ENCODE measurements at regions of chr9 and their contacts with region 1.

Region 1: DNA sequence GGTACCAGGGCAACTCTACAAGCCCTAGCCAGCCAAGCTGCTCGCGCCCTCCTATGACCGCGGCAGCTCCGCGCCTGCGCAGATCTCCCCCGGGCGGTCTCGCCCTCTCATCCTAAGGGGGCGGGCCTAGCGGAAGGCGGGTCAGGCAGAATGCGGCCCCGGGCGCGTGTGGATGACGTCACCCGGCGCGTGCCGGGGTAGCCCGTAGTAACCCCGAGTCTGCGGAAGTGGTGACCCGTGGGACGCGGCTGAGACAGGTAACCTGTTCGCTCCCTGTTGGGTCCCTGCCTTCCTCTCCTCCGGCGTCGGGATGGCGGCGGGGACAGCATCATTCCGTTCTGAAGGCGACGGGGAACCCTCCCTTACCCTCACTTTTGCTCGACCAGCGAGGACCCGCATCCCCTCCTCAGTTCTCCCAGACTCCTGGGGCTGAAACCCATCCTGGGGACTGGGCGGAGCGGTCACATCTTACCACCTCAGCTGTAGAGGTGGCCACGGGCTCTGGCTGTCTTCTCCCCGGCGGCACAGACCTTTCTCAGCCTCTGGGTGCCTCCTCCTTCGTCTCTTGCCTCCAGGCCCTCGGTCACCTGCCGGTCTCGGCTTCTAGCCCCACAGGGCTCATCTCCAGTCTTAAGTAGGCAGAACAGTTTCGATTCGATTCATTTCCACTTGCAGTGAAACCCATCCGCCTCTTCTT is at the start of gene AOPEP:
- DNase-seq: peak; percentile 98 to 100 (median 99)
- ATAC-seq: peak; percentile 99
- H3K4me3 ChIP-seq: peak within 1 kb of the TSS; percentile 92
- H3K4me3 Mint-ChIP-seq: peak within 1 kb of the TSS; percentile 88 to 100 (median 98)
- H3K27ac ChIP-seq: peak within 1 kb of the TSS; percentile 82
- H3K27ac Mint-ChIP-seq: peak within 1 kb of the TSS; percentile 92 to 100 (median 98)
- H3K4me1 ChIP-seq: peaks cover 7% of the 10 kb centered on the region in 2 donors
- H3K4me1 Mint-ChIP-seq: peaks cover 7 to 24% (median 19%) of the 10 kb centered on the region in 7 donors
- H3K27me3 ChIP-seq: no peaks in the 10 kb centered on the region
- H3K27me3 Mint-ChIP-seq: peaks cover 0 to 2% (median 0%) of the 10 kb centered on the region in 5 donors
- total RNA-seq, gene AOPEP: 11.0 to 19.0 (median 14.9) TPM

Region 2: GRCh38 chr9:93064392-93065134 is 1662.1 kb before region 1 on chr9:
- CTCF ChIA-PET with region 1: no interaction called
- POLR2A ChIA-PET with region 1: no interaction called
- intact Hi-C with region 1: loop called in 1 of 2 experiments (anchors 10 kb)
- DNase-seq: peak; percentile 54 to 95 (median 90)
- ATAC-seq: peak; percentile 96
- H3K4me3 ChIP-seq: peak overlapping the region; percentile 90
- H3K4me3 Mint-ChIP-seq: peak overlapping the region; percentile 87 to 97 (median 92)
- H3K27ac ChIP-seq: peak overlapping the region; percentile 88
- H3K27ac Mint-ChIP-seq: peak overlapping the region; percentile 97 to 100 (median 99)
- H3K4me1 ChIP-seq: peaks cover 63 to 87% of the 10 kb centered on the region in 2 donors
- H3K4me1 Mint-ChIP-seq: peaks cover 71 to 95% (median 86%) of the 10 kb centered on the region in 7 donors
- H3K27me3 ChIP-seq: no peaks in the 10 kb centered on the region
- H3K27me3 Mint-ChIP-seq: no peaks in the 10 kb centered on the region

Region 3: DNA sequence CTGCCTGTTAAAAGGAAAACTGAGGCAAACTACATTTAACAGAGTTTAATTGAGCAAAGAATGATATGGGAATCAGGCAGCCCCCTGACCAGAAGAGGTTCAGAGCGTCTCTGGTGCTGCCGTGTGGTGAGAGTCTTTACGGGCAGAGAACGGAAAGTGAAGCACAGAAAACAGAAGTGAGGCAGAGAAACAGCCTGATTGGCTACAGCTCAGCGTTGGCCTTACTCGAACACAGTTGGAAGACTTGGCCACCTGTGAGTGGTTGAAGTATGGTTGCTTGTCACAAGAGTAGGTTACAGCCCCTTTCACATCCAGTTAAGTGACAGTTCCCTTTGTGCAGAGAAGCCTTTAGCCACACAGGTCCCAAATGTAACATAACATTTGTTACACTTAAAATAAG is 70.4 kb before region 1 on chr9:
- CTCF ChIA-PET with region 1: no interaction called
- POLR2A ChIA-PET with region 1: interaction called, 10 read pairs
- intact Hi-C with region 1: no loop called
- DNase-seq: peak in 8 of 9 donors; percentile 28 to 73 (median 60)
- ATAC-seq: peak; percentile 89
- H3K4me3 ChIP-seq: peak overlapping the region; percentile 49
- H3K4me3 Mint-ChIP-seq: peak overlapping the region; percentile 76 to 92 (median 83)
- H3K27ac ChIP-seq: peak overlapping the region; percentile 66
- H3K27ac Mint-ChIP-seq: peak overlapping the region; percentile 84 to 96 (median 92)
- H3K4me1 ChIP-seq: peaks cover 0 to 15% of the 10 kb centered on the region in 2 donors
- H3K4me1 Mint-ChIP-seq: peaks cover 10 to 31% (median 28%) of the 10 kb centered on the region in 7 donors
- H3K27me3 ChIP-seq: no peaks in the 10 kb centered on the region
- H3K27me3 Mint-ChIP-seq: peaks cover 0 to 6% (median 0%) of the 10 kb centered on the region in 5 donors

Region 4: DNA sequence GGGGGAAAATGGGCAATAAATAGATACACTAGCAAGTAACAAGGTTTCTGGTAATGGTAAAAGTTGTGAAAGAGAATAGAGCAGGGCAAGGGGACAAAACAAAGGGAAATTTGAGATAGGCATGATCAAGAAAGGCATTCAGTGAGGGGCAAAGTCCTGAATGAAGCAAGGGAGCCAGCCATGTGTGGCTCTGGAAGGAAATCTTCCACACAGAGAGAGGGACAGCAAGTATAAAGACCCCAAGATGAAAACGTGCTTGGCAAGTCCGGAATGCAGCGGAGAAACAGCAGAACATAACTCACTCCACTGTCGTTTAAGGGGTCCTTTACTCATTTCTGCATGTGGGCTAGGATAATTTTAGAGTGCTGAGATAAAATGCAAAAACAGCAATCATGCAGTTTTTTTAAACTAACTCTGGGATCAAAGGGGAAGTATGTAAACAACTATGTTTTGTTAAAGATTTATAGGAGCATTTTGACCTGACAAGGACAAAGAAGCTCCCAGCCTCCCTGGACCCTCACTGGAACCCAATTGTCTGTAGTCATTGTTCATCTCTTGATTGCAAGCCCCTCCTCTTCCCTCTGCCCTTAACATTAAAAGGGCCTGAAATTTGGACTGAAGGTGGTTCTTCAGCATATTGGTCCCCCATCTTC is 23.0 kb before region 1 on chr9:
- CTCF ChIA-PET with region 1: no interaction called
- POLR2A ChIA-PET with region 1: no interaction called
- intact Hi-C with region 1: no loop called
- DNase-seq: no peak
- ATAC-seq: no peak
- H3K4me3 ChIP-seq: no peak overlapping the region
- H3K4me3 Mint-ChIP-seq: no peak overlapping the region
- H3K27ac ChIP-seq: no peak overlapping the region
- H3K27ac Mint-ChIP-seq: no peak overlapping the region
- H3K4me1 ChIP-seq: no peaks in the 10 kb centered on the region
- H3K4me1 Mint-ChIP-seq: no peaks in the 10 kb centered on the region
- H3K27me3 ChIP-seq: no peaks in the 10 kb centered on the region
- H3K27me3 Mint-ChIP-seq: peaks cover 0 to 20% (median 18%) of the 10 kb centered on the region in 5 donors

Region 5: DNA sequence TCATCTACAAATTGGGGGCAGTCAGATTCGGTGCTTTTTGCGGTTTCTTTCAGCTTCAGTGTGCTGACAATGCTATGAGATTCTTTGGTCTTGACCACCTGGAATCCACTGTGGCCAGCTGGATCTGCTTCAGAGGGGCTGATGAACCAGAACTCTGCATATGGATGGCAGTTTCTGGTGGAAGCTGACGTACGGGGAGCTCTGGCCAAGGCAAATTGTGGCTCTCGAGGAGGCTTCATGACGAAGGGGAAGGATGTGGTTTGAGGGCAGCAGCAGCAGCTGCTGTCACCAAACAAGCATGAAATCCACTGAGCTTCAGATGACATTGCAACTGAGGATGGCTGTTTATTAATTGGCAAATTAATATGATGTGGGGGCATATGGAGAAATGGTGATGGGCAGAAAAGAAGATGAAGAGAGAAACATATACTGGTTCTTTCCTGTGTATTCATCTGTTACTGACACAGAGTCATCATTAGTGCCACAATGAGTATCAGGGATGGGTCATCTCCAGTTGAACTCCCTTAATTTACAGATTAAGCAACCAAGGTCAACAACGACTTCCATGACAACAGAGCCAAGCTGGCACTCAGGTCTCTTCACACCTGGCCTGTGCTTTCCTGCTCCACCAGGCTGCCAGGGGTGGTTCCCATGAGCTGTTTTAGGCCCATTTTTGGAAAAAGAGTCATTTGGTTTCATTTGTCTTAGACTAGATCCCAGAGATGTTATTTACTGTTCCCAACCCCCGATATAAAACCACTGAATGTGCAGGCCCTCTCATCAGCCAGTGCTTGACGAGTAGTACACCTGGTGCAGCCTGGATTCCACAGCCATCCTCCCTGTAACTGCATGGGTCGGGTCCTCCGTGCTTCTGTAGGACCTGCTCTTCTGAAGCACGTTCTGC is 134.6 kb after region 1 on chr9:
- CTCF ChIA-PET with region 1: no interaction called
- POLR2A ChIA-PET with region 1: interaction called, 3 read pairs
- intact Hi-C with region 1: loop called (anchors 1 kb)
- DNase-seq: peak; percentile 31 to 86 (median 78)
- ATAC-seq: peak; percentile 93
- H3K4me3 ChIP-seq: peak overlapping the region; percentile 40
- H3K4me3 Mint-ChIP-seq: peak overlapping the region; percentile 73 to 85 (median 82)
- H3K27ac ChIP-seq: no peak overlapping the region
- H3K27ac Mint-ChIP-seq: peak overlapping the region; percentile 25 to 96 (median 92)
- H3K4me1 ChIP-seq: peaks cover 25 to 26% of the 10 kb centered on the region in 2 donors
- H3K4me1 Mint-ChIP-seq: peaks cover 26 to 55% (median 47%) of the 10 kb centered on the region in 7 donors
- H3K27me3 ChIP-seq: no peaks in the 10 kb centered on the region
- H3K27me3 Mint-ChIP-seq: no peaks in the 10 kb centered on the region

Region 6: GRCh38 chr9:95048225-95049087 is 321.8 kb after region 1 on chr9:
- CTCF ChIA-PET with region 1: no interaction called
- POLR2A ChIA-PET with region 1: no interaction called
- intact Hi-C with region 1: loop called in 1 of 2 experiments (anchors 1 kb)
- DNase-seq: peak in 8 of 9 donors; percentile 6 to 56 (median 16)
- ATAC-seq: peak; percentile 92
- H3K4me3 ChIP-seq: peak overlapping the region; percentile 41
- H3K4me3 Mint-ChIP-seq: peak overlapping the region; percentile 74 to 85 (median 80)
- H3K27ac ChIP-seq: no peak overlapping the region
- H3K27ac Mint-ChIP-seq: peak overlapping the region in 3 of 9 donors; percentile 1 to 68 (median 56)
- H3K4me1 ChIP-seq: peaks cover 0 to 4% of the 10 kb centered on the region in 2 donors
- H3K4me1 Mint-ChIP-seq: peaks cover 0 to 14% (median 10%) of the 10 kb centered on the region in 7 donors
- H3K27me3 ChIP-seq: peaks cover 8 to 9% of the 10 kb centered on the region in 2 donors
- H3K27me3 Mint-ChIP-seq: peaks cover 20 to 42% (median 26%) of the 10 kb centered on the region in 5 donors

Region 7: DNA sequence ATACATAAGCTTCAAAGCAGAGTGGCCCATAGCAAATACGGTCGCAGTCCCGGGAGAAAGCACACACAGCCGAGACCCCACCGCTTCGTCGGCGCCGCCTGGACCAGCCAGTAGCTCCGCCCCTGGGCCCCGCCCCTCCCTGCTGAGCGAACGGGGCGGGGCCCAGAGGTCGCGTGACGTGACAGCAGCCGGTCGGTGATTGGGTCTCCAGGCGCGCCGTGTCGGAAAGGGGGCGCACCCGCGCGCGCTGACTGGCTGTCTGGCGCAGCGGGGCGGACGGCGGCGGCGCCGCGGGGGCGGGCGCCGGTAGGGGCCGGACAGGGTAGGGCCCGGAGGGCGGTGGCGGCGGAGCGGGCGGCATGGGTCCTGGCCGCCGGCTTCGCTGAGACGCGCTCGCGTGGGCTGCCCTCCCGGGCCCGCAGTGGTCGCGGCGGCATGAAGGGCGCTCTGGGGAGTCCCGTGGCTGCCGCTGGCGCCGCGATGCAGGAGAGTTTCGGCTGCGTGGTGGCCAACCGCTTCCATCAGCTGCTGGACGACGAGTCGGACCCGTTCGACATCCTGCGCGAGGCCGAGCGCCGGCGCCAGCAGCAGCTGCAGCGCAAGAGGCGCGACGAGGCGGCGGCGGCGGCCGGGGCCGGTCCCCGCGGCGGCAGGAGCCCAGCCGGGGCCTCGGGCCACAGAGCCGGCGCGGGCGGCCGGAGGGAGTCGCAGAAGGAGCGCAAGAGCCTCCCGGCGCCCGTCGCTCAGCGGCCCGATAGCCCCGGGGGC is 1723.4 kb after region 1 on chr9 and contains the start of gene HABP4:
- CTCF ChIA-PET with region 1: no interaction called
- POLR2A ChIA-PET with region 1: no interaction called
- intact Hi-C with region 1: loop called in 1 of 2 experiments (anchors 10 kb)
- DNase-seq: peak; percentile 90 to 97 (median 95)
- ATAC-seq: peak; percentile 98
- H3K4me3 ChIP-seq: peak within 1 kb of the TSS; percentile 77
- H3K4me3 Mint-ChIP-seq: peak within 1 kb of the TSS; percentile 88 to 99 (median 93)
- H3K27ac ChIP-seq: peak within 1 kb of the TSS; percentile 74
- H3K27ac Mint-ChIP-seq: peak within 1 kb of the TSS; percentile 74 to 98 (median 94)
- H3K4me1 ChIP-seq: peaks cover 5 to 14% of the 10 kb centered on the region in 2 donors
- H3K4me1 Mint-ChIP-seq: peaks cover 19 to 33% (median 26%) of the 10 kb centered on the region in 7 donors
- H3K27me3 ChIP-seq: no peaks in the 10 kb centered on the region
- H3K27me3 Mint-ChIP-seq: peaks cover 0 to 41% (median 6%) of the 10 kb centered on the region in 5 donors
- total RNA-seq, gene HABP4: 6.6 to 40.3 (median 23.9) TPM